GM10248 (cell line): ENCODE measurements at regions of chr11 and their contacts with region 1.

Region 1: DNA sequence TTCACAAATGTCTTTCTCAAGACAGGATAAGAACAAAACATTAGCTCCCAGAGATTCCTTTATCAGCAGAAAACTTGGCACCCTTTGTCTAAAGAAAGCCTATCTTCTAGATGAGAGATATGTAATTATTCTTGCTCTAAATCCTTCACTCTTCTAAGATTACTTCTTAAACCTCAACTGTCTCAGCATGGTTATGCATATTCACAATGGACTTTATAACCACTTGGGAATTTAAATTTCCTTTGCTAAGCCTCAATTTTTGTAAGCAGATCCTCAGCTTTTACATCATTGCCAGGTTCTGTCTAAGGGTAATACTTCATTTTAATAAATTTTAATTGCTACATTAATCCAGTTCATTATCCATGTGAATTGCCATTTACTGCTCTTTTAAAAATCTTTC is 433.6 kb upstream of the DDI1 start:
- DNase-seq: no peak
- CTCF ChIP-seq: no peak

Region 2: DNA sequence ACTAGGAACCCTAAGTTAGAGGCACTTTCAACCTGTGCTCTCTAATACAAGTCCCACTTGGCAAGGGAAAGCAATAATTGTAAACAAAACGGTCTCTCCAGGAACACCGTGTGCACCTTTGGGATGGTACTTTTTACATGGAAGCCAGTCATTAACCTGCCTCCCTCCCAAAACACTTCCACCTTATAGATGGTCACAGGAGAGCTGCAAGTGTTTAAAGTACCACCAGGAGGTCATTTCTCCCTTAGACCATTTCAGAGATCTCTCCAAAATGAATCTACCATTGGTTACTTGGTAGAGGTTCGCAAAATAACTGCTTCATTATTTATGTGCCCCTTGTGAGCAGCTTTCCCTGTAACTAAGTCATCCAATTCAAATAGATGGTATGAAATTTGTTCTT is 118.3 kb before region 1 on chr11:
- CTCF ChIA-PET with region 1: no interaction called
- POLR2A ChIA-PET with region 1: no interaction called
- DNase-seq: no peak
- CTCF ChIP-seq: no peak

Region 3: GRCh38 chr11:103539166-103539565 is 63.7 kb before region 1 on chr11:
- CTCF ChIA-PET with region 1: no interaction called
- POLR2A ChIA-PET with region 1: no interaction called
- DNase-seq: no peak
- CTCF ChIP-seq: no peak

Region 4: DNA sequence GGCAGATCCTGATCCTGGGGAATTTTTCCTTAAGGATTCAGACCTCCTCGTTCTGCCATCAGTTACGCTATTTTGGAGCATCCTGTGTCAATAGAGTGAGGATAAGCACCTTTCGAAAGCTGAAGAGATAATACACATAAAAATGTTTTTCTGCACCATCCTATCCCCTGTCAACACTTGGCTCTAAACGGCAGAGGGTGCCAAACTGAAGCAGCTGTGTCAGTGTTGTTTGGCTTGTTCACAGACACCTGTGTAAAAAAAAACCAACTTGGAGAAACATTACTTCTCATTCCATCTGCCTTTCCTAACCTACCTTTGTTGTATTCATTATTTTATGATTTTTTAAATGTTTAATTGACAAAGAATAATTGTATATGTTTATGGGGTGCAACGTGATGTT is 16.6 kb after region 1 on chr11:
- CTCF ChIA-PET with region 1: interaction called, 12 read pairs
- POLR2A ChIA-PET with region 1: no interaction called
- DNase-seq: no peak
- CTCF ChIP-seq: no peak